PC-3 (cell line): ENCODE measurements at regions of chr2 and their contacts with region 1.

Region 1: DNA sequence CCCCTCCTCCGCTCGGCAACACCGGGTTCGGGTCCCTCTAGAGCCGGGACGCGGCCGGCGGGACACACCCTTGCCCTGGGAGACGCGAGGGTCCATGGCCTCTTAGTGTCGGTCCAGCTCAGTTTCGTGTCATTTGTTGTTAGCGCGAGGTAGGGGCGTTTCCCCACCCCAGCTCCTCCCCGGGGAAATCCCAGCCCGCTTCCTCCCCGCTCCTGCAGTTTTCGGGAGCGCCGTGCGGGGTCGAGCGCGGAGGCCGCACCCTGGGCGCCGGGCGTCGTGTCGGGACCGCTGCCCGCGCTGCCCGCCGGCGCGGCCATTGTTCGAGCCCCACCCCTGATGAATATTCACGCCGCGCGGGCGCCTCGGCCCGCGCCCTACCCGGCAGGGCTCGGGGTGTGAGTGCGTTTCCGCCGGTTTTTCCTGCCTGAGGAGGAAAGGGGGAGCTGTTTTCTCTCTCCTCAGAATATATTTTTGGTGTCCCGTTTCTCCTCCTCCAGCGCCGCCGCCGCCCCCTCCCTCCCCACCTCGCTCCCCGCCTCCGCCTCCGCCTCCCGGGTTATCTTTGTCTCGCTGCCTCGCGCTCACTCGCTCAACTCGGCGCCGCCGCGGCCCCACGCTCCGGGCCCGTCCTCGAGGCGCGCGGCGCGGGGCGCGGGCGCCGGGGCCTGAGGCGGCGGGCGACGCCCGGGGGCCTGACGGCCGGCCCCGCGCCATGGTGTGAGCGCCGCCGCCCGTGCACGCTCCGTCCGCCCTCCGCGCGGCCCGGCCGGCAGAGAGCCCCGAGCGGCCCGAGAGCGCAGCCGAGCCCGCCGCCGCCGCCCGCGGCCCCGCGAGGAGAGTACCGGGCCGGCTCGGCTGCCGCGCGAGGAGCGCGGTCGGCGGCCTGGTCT is at the start of gene MAP4K4:
- DNase-seq: peak; percentile 84
- ATAC-seq: peak; percentile 59
- H3K4me3 ChIP-seq: peak within 1 kb of the TSS; percentile 96
- H3K27ac ChIP-seq: peak within 1 kb of the TSS; percentile 64
- H3K4me1 ChIP-seq: peaks cover 17% of the 10 kb centered on the region
- H3K27me3 ChIP-seq: no peaks in the 10 kb centered on the region
- CTCF ChIP-seq: peak; percentile 27; the same call in 1 of the 2 replicates
- total RNA-seq, gene MAP4K4: 133 and 167 TPM in 2 replicates

Region 2: DNA sequence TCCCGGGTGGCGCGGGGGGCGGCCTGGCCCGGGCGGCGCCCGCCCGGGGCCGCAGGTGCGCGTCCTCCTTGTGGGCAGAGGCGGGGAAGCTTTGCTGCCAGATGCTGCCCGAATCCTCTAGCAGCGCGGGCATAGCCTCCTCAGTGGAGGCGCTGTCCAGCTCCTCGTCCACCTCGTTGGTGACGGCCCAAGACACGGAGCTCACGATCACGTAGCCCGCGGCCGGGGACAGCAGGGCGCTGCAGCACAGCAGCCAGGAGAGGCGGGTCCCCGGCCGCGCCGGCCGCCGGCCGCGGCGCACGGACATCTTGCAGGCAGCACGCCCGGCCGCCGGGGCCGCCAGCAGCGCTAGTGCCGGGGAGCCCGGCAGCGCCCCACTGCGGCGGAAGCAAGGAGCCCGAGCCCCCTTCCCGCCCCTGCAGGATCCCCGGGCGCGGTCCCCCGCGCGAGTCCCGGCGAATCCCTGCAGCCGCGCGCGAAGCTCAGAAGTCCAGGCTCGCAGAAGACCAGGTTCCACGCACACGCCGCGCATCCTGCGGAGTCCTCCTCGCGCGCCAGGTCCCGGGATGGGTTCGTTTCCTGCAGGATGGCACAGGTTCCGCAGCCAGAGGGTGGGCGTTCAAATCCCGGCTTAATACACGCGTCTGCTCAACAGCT is 310.1 kb before region 1 on chr2 and contains the start of gene CREG2:
- CTCF ChIA-PET with region 1: interaction called, 3 read pairs
- POLR2A ChIA-PET with region 1: no interaction called
- intact Hi-C with region 1: loop called (anchors 5 kb)
- DNase-seq: peak; percentile 78
- ATAC-seq: peak; percentile 64
- H3K4me3 ChIP-seq: peak within 1 kb of the TSS; percentile 90
- H3K27ac ChIP-seq: peak within 1 kb of the TSS; percentile 98
- H3K4me1 ChIP-seq: peaks cover 40% of the 10 kb centered on the region
- H3K27me3 ChIP-seq: no peaks in the 10 kb centered on the region
- CTCF ChIP-seq: peak; percentile 62
- total RNA-seq, gene CREG2: 40.0 and 67.9 TPM in 2 replicates

Region 3: DNA sequence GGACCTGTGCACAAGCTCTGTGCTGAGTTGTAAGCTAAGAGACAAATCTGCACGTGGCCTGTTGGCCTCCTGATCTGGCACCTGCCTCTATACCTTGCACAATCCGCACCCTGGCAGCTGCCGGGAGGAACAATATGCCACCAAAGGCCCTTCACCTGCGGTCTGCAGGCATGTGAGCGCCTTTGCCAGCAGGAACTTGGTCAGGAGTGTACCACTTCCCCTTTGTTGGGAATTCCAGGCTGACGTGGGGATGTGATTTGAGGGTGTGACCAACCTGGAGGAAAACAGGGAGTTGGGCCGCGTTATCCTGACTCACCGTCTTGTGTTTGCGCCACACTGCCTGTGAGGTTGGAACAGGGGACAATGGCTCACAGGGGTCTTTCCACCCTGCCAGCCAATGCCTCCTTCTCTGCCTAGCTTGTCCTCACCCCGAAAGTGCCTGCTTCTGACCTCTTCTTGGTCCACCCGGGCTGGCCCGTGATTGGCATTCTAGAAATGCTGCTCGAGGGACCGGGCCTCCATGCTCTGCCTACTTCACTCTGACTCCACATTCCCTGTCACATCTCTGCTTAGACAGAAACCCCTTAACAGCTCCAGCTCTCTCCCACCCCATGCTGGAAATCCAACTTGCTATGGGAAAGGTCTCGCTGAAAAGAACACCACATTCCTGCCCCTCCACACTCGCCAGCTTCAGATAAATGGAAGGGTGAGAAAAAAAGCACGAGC is 67.0 kb before region 1 on chr2:
- CTCF ChIA-PET with region 1: no interaction called
- POLR2A ChIA-PET with region 1: no interaction called
- intact Hi-C with region 1: loop called (anchors 2 kb)
- DNase-seq: peak; percentile 95
- ATAC-seq: peak; percentile 97
- H3K4me3 ChIP-seq: no peak overlapping the region
- H3K27ac ChIP-seq: peak overlapping the region; percentile 86
- H3K4me1 ChIP-seq: peaks cover 16% of the 10 kb centered on the region
- H3K27me3 ChIP-seq: no peaks in the 10 kb centered on the region
- CTCF ChIP-seq: no peak

Region 4: DNA sequence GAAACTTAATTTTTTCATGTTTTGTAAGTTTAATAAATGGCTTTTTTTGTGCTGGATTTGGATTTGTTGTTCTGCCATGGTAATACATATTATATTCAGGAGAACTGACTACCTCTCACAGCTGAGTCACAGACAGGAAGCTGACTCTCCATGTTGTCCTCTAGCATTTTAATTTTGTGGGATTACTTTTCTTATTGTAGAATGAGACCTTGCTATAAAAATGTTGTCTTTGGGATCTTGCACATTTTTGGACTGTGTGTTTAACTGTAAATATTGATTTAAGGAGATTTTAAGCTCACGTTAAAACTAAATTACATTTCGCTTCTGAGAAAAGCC is 49.0 kb after region 1 on chr2:
- CTCF ChIA-PET with region 1: interaction called, 4 read pairs
- POLR2A ChIA-PET with region 1: interaction called, 4 read pairs
- intact Hi-C with region 1: loop called (anchors 2 kb)
- DNase-seq: peak; percentile 88
- ATAC-seq: peak; percentile 92
- H3K4me3 ChIP-seq: peak overlapping the region; percentile 49
- H3K27ac ChIP-seq: peak overlapping the region; percentile 98
- H3K4me1 ChIP-seq: peaks cover 57% of the 10 kb centered on the region
- H3K27me3 ChIP-seq: no peaks in the 10 kb centered on the region
- CTCF ChIP-seq: no peak

Region 5: GRCh38 chr2:101823347-101823791 is 126.0 kb after region 1 on chr2:
- CTCF ChIA-PET with region 1: interaction called, 3 read pairs
- POLR2A ChIA-PET with region 1: interaction called, 6 read pairs
- intact Hi-C with region 1: loop called (anchors 2 kb)
- DNase-seq: peak; percentile 67
- ATAC-seq: no peak
- H3K4me3 ChIP-seq: no peak overlapping the region
- H3K27ac ChIP-seq: peak overlapping the region; percentile 78
- H3K4me1 ChIP-seq: peaks cover 71% of the 10 kb centered on the region
- H3K27me3 ChIP-seq: no peaks in the 10 kb centered on the region
- CTCF ChIP-seq: peak; percentile 69